ENCODE measurements at regions of chr4 and their contacts with region 1.

Region 1: GRCh38 chr4:39527273-39528060 is at the start of gene UGDH:
- DNase-seq: peak; percentile 99
- ATAC-seq: peak; percentile 96
- H3K4me3 ChIP-seq: peak within 1 kb of the TSS; percentile 76
- H3K27ac ChIP-seq: peak within 1 kb of the TSS; percentile 93
- H3K4me1 ChIP-seq: peaks cover 7% of the 10 kb centered on the region
- H3K27me3 ChIP-seq: no peaks in the 10 kb centered on the region
- CTCF ChIP-seq: no peak
- POLR2A ChIP-seq: peak; percentile 99
- RAD21 ChIP-seq: peak; percentile 21
- total RNA-seq, gene UGDH: 257 and 600 TPM in 2 replicates

Region 2: GRCh38 chr4:39469429-39470077 is 57.9 kb before region 1 on chr4:
- CTCF ChIA-PET with region 1: interaction called, 3 read pairs
- POLR2A ChIA-PET with region 1: no interaction called
- dilution Hi-C with region 1: no loop called
- in situ Hi-C with region 1: no loop called
- intact Hi-C with region 1: loop called (anchors 2 kb)
- DNase-seq: peak; percentile 87
- ATAC-seq: peak; percentile 83
- H3K4me3 ChIP-seq: no peak overlapping the region
- H3K27ac ChIP-seq: no peak overlapping the region
- H3K4me1 ChIP-seq: no peaks in the 10 kb centered on the region
- H3K27me3 ChIP-seq: no peaks in the 10 kb centered on the region
- CTCF ChIP-seq: peak; percentile 97
- POLR2A ChIP-seq: no peak
- RAD21 ChIP-seq: peak; percentile 87

Region 3: DNA sequence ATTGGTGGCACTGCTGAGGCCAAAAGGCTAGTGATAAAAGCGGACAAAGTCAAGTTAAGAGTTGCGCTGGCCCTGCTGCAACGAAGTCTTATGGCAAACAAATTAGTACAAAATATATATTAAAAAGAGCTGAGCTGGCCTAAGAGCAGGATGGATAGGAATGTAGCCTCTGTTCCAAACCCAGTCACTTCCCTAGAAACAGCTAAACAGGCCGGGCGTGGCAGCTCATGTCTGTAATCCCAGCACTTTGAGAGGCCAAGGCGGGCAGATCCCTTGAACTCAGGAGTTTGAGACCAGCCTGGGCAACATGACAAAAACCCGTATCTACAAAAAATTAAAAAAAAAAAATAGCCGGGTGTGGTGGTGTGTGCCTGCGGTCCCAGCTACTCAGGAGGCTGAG is 32.2 kb after region 1 on chr4:
- CTCF ChIA-PET with region 1: no interaction called
- POLR2A ChIA-PET with region 1: no interaction called
- dilution Hi-C with region 1: no loop called
- in situ Hi-C with region 1: no loop called
- intact Hi-C with region 1: loop called (anchors 1 kb)
- DNase-seq: no peak
- ATAC-seq: no peak
- H3K4me3 ChIP-seq: no peak overlapping the region
- H3K27ac ChIP-seq: peak overlapping the region; percentile 48; the same call in 1 of the 2 replicates
- H3K4me1 ChIP-seq: peaks cover 8% of the 10 kb centered on the region
- H3K27me3 ChIP-seq: no peaks in the 10 kb centered on the region
- CTCF ChIP-seq: no peak
- POLR2A ChIP-seq: no peak
- RAD21 ChIP-seq: no peak

Region 4: GRCh38 chr4:39591290-39591689 is 63.8 kb after region 1 on chr4:
- CTCF ChIA-PET with region 1: no interaction called
- POLR2A ChIA-PET with region 1: no interaction called
- dilution Hi-C with region 1: no loop called
- in situ Hi-C with region 1: no loop called
- intact Hi-C with region 1: loop called (anchors 2 kb)
- DNase-seq: peak; percentile 50
- ATAC-seq: peak; percentile 54
- H3K4me3 ChIP-seq: no peak overlapping the region
- H3K27ac ChIP-seq: no peak overlapping the region
- H3K4me1 ChIP-seq: peaks cover 5% of the 10 kb centered on the region; the same call in 1 of the 2 replicates
- H3K27me3 ChIP-seq: no peaks in the 10 kb centered on the region
- CTCF ChIP-seq: peak; percentile 47
- POLR2A ChIP-seq: no peak
- RAD21 ChIP-seq: peak; percentile 62

Region 5: DNA sequence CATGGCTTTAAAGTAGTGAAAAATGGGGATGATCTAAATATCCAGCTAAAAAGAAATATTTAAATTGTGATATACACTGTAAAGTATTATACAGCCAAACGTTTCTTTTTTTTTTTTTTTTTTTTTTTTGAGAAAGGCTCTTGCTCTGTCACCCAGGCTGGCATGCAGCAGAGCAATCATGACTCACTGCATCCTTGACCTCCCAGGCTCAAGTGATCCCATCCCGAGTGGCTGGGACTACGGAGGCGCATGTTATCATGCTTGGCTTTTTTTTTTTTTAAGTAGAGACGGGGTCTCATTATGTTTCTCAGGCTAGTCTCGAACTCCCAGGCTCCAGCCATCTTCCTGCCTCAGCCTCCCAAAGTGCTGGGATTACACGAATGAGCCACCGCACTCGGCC is 94.1 kb after region 1 on chr4:
- CTCF ChIA-PET with region 1: no interaction called
- POLR2A ChIA-PET with region 1: no interaction called
- dilution Hi-C with region 1: no loop called
- in situ Hi-C with region 1: no loop called
- intact Hi-C with region 1: loop called (anchors 5 kb)
- DNase-seq: peak; percentile 81
- ATAC-seq: peak; percentile 76
- H3K4me3 ChIP-seq: no peak overlapping the region
- H3K27ac ChIP-seq: peak overlapping the region; percentile 65
- H3K4me1 ChIP-seq: peaks cover 6% of the 10 kb centered on the region
- H3K27me3 ChIP-seq: no peaks in the 10 kb centered on the region
- CTCF ChIP-seq: no peak
- POLR2A ChIP-seq: no peak
- RAD21 ChIP-seq: no peak

Region 6: GRCh38 chr4:39638354-39639240 is 111.1 kb after region 1 on chr4 and contains the start of gene SMIM14:
- CTCF ChIA-PET with region 1: no interaction called
- POLR2A ChIA-PET with region 1: interaction called, 8 read pairs
- dilution Hi-C with region 1: no loop called
- in situ Hi-C with region 1: loop called (anchors 10 kb)
- intact Hi-C with region 1: loop called (anchors 1 kb)
- DNase-seq: peak; percentile 98
- ATAC-seq: peak; percentile 96
- H3K4me3 ChIP-seq: peak within 1 kb of the TSS; percentile 87
- H3K27ac ChIP-seq: peak within 1 kb of the TSS; percentile 88
- H3K4me1 ChIP-seq: no peaks in the 10 kb centered on the region; the same call in 1 of the 2 replicates
- H3K27me3 ChIP-seq: no peaks in the 10 kb centered on the region
- CTCF ChIP-seq: no peak
- POLR2A ChIP-seq: peak; percentile 98
- RAD21 ChIP-seq: peak; percentile 26; the same call in 1 of the 2 replicates
- total RNA-seq, gene SMIM14: 15.6 and 30.8 TPM in 2 replicates

Region 7: DNA sequence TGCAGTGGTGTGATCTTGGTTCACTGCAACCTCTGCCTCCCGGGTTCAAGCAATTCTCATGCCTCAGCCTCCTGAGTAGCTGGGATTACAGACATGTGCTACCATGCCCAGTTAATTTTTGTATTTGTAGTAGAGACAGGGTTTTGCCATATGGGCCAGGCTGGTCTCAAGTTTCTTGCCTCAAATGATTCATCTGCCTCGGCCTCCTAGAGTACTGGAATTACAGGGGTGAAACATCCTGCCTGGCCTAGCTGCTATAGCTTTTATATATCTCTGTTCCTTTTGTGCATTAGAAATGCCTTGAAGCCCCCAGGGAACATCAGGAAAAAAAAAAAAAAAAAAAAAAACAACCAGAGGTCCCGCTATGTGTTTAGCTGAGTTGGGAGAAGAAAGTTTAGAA is 205.3 kb after region 1 on chr4:
- CTCF ChIA-PET with region 1: no interaction called
- POLR2A ChIA-PET with region 1: no interaction called
- dilution Hi-C with region 1: no loop called
- in situ Hi-C with region 1: no loop called
- intact Hi-C with region 1: no loop called
- DNase-seq: peak; percentile 90
- ATAC-seq: peak; percentile 98
- H3K4me3 ChIP-seq: no peak overlapping the region
- H3K27ac ChIP-seq: no peak overlapping the region
- H3K4me1 ChIP-seq: peaks cover 10% of the 10 kb centered on the region
- H3K27me3 ChIP-seq: no peaks in the 10 kb centered on the region
- CTCF ChIP-seq: no peak
- POLR2A ChIP-seq: no peak
- RAD21 ChIP-seq: no peak

Region 8: GRCh38 chr4:39977489-39978377 is 450.3 kb after region 1 on chr4 and contains the start of gene PDS5A:
- CTCF ChIA-PET with region 1: no interaction called
- POLR2A ChIA-PET with region 1: no interaction called
- dilution Hi-C with region 1: no loop called
- in situ Hi-C with region 1: no loop called
- intact Hi-C with region 1: loop called (anchors 1 kb)
- DNase-seq: peak; percentile 84
- ATAC-seq: peak; percentile 89
- H3K4me3 ChIP-seq: peak within 1 kb of the TSS; percentile 96
- H3K27ac ChIP-seq: peak within 1 kb of the TSS; percentile 91
- H3K4me1 ChIP-seq: peaks cover 2% of the 10 kb centered on the region
- H3K27me3 ChIP-seq: no peaks in the 10 kb centered on the region
- CTCF ChIP-seq: peak; percentile 99
- POLR2A ChIP-seq: peak; percentile 62
- RAD21 ChIP-seq: peak; percentile 71
- total RNA-seq, gene PDS5A: 33.5 and 53.0 TPM in 2 replicates